CD4-positive, alpha-beta memory T cell (primary cell): ENCODE measurements at regions of chr5 and their contacts with region 1.

Region 1: GRCh38 chr5:32585446-32586275 is at the start of gene SUB1:
- DNase-seq: peak; percentile 92 to 95 (median 93)
- H3K4me3 ChIP-seq: peak within 1 kb of the TSS; percentile 89 to 92
- H3K4me3 Mint-ChIP-seq: peak within 1 kb of the TSS; percentile 90 to 99 (median 96)
- H3K27ac ChIP-seq: peak within 1 kb of the TSS; percentile 97
- H3K27ac Mint-ChIP-seq: peak within 1 kb of the TSS; percentile 90 to 99 (median 97)
- H3K4me1 ChIP-seq: peaks cover 67% of the 10 kb centered on the region
- H3K4me1 Mint-ChIP-seq: peaks cover 46 to 82% (median 61%) of the 10 kb centered on the region in 4 donors
- H3K27me3 ChIP-seq: no peaks in the 10 kb centered on the region
- H3K27me3 Mint-ChIP-seq: no peaks in the 10 kb centered on the region
- total RNA-seq, gene SUB1: 204 to 214 TPM

Region 2: GRCh38 chr5:32174011-32174870 is 411.4 kb before region 1 on chr5 and contains the start of gene GOLPH3:
- CTCF ChIA-PET with region 1: interaction called, 3 read pairs
- POLR2A ChIA-PET with region 1: interaction called, 12 read pairs
- intact Hi-C with region 1: loop called (anchors 1 kb)
- DNase-seq: peak; percentile 89 to 94 (median 91)
- H3K4me3 ChIP-seq: peak within 1 kb of the TSS; percentile 62 to 69
- H3K4me3 Mint-ChIP-seq: peak within 1 kb of the TSS; percentile 94 to 99 (median 98)
- H3K27ac ChIP-seq: peak within 1 kb of the TSS; percentile 98
- H3K27ac Mint-ChIP-seq: peak within 1 kb of the TSS; percentile 93 to 99 (median 99)
- H3K4me1 ChIP-seq: peaks cover 31% of the 10 kb centered on the region
- H3K4me1 Mint-ChIP-seq: peaks cover 24 to 52% (median 31%) of the 10 kb centered on the region in 4 donors
- H3K27me3 ChIP-seq: no peaks in the 10 kb centered on the region
- H3K27me3 Mint-ChIP-seq: peaks cover 2 to 7% of the 10 kb centered on the region in 2 donors
- total RNA-seq, gene GOLPH3: 67.4 to 74.5 TPM

Region 3: GRCh38 chr5:32394981-32395380 is 190.7 kb before region 1 on chr5:
- CTCF ChIA-PET with region 1: interaction called, 12 read pairs
- POLR2A ChIA-PET with region 1: no interaction called
- intact Hi-C with region 1: no loop called
- DNase-seq: no peak
- H3K4me3 ChIP-seq: no peak overlapping the region
- H3K4me3 Mint-ChIP-seq: no peak overlapping the region
- H3K27ac ChIP-seq: no peak overlapping the region
- H3K27ac Mint-ChIP-seq: peak overlapping the region in 1 of 7 donors; percentile 25
- H3K4me1 ChIP-seq: no peaks in the 10 kb centered on the region
- H3K4me1 Mint-ChIP-seq: no peaks in the 10 kb centered on the region
- H3K27me3 ChIP-seq: no peaks in the 10 kb centered on the region
- H3K27me3 Mint-ChIP-seq: no peaks in the 10 kb centered on the region

Region 4: DNA sequence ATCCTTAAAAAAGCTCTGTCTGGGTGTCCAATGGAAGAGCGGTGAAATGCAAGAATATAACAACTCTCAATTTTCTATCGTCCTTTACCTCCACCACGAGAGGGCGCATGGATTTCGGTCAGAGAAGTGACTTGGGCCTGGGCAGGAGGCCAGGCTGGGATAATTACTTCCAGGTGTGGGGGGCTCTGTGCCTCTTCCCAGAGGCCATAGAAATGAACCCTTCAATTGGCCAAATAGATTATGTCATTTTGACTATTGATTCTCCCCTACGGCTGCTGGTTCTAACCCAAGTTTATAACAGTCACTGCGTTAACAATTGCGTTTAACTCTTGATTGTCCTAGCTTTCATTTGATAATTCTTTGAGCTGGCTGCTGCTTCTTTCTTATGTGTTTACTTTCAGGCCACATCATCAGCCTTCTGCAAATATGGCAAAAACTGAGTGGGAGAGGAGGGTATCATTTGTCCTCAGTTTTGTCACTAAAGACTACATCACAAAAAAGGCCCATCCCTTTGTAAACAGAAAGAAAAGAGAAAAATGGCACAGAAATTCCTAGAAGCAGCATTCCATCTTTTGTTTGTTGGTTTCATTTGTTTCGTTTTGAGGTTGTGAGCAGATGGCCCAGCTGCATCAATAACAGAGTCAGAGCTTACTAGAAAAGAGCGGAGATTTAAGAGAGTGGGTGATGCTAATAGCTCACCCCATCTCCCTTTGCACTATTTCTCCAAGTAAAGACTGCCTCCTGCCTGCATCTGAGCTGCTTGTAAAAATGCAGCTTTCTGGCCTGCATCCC is 95.7 kb before region 1 on chr5:
- CTCF ChIA-PET with region 1: interaction called, 541 read pairs
- POLR2A ChIA-PET with region 1: interaction called, 39 read pairs
- intact Hi-C with region 1: loop called (anchors 1 kb)
- DNase-seq: peak; percentile 61 to 71 (median 68)
- H3K4me3 ChIP-seq: no peak overlapping the region
- H3K4me3 Mint-ChIP-seq: no peak overlapping the region
- H3K27ac ChIP-seq: no peak overlapping the region
- H3K27ac Mint-ChIP-seq: peak overlapping the region in 1 of 7 donors; percentile 3
- H3K4me1 ChIP-seq: no peaks in the 10 kb centered on the region
- H3K4me1 Mint-ChIP-seq: peaks cover 0 to 6% (median 1%) of the 10 kb centered on the region in 4 donors
- H3K27me3 ChIP-seq: no peaks in the 10 kb centered on the region
- H3K27me3 Mint-ChIP-seq: no peaks in the 10 kb centered on the region

Region 5: DNA sequence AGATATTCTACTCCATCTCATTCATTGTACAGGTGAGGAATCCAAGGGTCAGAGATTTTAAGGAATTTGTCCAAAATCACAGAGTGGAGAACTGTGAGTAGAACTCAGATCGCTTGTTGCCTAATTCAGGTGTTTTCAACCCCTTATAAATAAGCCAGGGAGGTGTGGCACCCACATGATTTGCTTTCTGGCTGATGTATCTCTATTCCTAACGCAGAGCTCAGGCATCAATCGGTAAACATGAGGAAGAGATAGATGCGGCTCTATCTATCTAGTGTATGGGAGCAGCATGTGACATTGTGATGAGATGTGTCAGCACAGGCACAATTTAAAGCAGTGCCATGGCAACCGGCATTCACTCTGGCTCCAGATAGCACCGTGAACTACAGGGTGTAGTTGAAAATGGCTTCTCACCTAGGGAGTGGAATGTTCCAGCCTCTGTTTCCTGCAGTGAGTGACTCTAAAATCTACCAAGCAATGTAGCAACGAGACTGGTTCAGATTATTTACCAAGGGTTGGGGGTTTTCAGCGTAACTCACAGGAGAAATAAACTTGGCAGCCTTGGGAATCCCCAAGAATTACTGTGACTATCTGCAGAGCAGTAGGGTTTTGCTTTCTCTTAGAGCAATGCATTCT is 53.7 kb before region 1 on chr5:
- CTCF ChIA-PET with region 1: interaction called, 39 read pairs
- POLR2A ChIA-PET with region 1: interaction called, 60 read pairs
- intact Hi-C with region 1: loop called (anchors 1 kb)
- DNase-seq: peak; percentile 61 to 90 (median 69)
- H3K4me3 ChIP-seq: peak overlapping the region; percentile 42 to 68
- H3K4me3 Mint-ChIP-seq: peak overlapping the region; percentile 87 to 93 (median 90)
- H3K27ac ChIP-seq: peak overlapping the region; percentile 94
- H3K27ac Mint-ChIP-seq: peak overlapping the region; percentile 94 to 99 (median 97)
- H3K4me1 ChIP-seq: peaks cover 58% of the 10 kb centered on the region
- H3K4me1 Mint-ChIP-seq: peaks cover 37 to 66% (median 50%) of the 10 kb centered on the region in 4 donors
- H3K27me3 ChIP-seq: no peaks in the 10 kb centered on the region
- H3K27me3 Mint-ChIP-seq: no peaks in the 10 kb centered on the region

Region 6: DNA sequence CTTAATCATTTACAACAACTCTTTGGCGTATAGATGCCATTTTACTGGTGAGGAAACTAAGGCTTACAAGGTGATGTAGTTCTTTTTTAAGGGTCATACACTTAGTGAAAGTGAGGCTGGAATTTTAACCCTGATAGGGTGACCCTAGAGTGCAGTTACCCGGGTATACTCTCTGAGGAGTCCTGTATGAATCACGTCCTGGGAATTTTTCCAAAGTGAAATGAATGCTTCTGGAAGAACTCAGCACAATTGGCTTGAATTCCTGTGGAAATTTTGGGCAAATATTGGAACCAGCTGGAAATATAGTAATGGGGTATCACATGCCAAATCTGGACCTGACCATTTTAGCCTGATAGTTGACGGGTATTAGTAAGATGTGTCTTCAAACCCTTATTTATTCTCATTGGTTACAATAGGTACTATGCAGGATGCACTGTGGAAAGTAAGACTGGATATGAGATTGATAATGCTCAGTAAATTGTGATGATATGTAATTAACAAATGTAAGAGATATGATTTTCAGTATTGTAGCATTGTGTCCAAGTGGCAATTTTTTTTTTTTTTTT is 14.5 kb after region 1 on chr5:
- CTCF ChIA-PET with region 1: interaction called, 12 read pairs
- POLR2A ChIA-PET with region 1: interaction called, 5 read pairs
- intact Hi-C with region 1: no loop called
- DNase-seq: no peak
- H3K4me3 ChIP-seq: no peak overlapping the region
- H3K4me3 Mint-ChIP-seq: no peak overlapping the region
- H3K27ac ChIP-seq: no peak overlapping the region
- H3K27ac Mint-ChIP-seq: peak overlapping the region in 1 of 7 donors; percentile 6
- H3K4me1 ChIP-seq: peaks cover 38% of the 10 kb centered on the region
- H3K4me1 Mint-ChIP-seq: peaks cover 38 to 75% (median 49%) of the 10 kb centered on the region in 4 donors
- H3K27me3 ChIP-seq: no peaks in the 10 kb centered on the region
- H3K27me3 Mint-ChIP-seq: no peaks in the 10 kb centered on the region

Region 7: GRCh38 chr5:32628048-32628803 is 42.6 kb after region 1 on chr5:
- CTCF ChIA-PET with region 1: no interaction called
- POLR2A ChIA-PET with region 1: no interaction called
- intact Hi-C with region 1: no loop called
- DNase-seq: no peak
- H3K4me3 ChIP-seq: no peak overlapping the region
- H3K4me3 Mint-ChIP-seq: no peak overlapping the region
- H3K27ac ChIP-seq: no peak overlapping the region
- H3K27ac Mint-ChIP-seq: no peak overlapping the region
- H3K4me1 ChIP-seq: no peaks in the 10 kb centered on the region
- H3K4me1 Mint-ChIP-seq: no peaks in the 10 kb centered on the region
- H3K27me3 ChIP-seq: no peaks in the 10 kb centered on the region
- H3K27me3 Mint-ChIP-seq: peaks cover 0 to 1% of the 10 kb centered on the region in 2 donors